ENCODE measurements at regions of chrX and their contacts with region 1.

Region 1: DNA sequence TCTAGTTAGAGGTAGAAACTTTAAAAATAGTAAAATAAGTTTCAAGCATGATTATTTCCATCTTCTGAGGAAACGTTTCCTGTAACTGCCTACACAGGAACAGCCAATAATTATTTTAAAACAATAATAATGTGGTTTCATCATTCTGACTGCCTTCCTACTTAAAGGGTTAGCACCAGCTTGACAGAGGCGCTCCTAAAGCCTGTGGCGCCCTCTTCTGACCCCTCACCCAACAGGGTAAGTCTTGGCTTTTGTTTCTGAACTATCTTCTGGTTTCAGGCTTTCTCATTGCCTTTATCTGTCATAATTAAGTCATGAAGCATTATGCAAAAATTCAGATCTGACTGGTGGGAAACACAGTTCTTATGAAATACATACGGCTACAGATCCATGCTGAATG is 96.7 kb downstream of the ITM2A start:
- DNase-seq: peak; percentile 68 to 77 (median 71)
- H3K4me3 ChIP-seq: no peak overlapping the region
- H3K4me3 Mint-ChIP-seq: peak overlapping the region; percentile 3 to 73 (median 22)
- H3K27ac ChIP-seq: peak overlapping the region; percentile 15
- H3K27ac Mint-ChIP-seq: peak overlapping the region; percentile 42 to 91 (median 64)
- H3K4me1 ChIP-seq: peaks cover 61% of the 10 kb centered on the region
- H3K4me1 Mint-ChIP-seq: peaks cover 27 to 49% (median 34%) of the 10 kb centered on the region in 4 donors
- H3K27me3 ChIP-seq: no peaks in the 10 kb centered on the region
- H3K27me3 Mint-ChIP-seq: no peaks in the 10 kb centered on the region

Region 2: DNA sequence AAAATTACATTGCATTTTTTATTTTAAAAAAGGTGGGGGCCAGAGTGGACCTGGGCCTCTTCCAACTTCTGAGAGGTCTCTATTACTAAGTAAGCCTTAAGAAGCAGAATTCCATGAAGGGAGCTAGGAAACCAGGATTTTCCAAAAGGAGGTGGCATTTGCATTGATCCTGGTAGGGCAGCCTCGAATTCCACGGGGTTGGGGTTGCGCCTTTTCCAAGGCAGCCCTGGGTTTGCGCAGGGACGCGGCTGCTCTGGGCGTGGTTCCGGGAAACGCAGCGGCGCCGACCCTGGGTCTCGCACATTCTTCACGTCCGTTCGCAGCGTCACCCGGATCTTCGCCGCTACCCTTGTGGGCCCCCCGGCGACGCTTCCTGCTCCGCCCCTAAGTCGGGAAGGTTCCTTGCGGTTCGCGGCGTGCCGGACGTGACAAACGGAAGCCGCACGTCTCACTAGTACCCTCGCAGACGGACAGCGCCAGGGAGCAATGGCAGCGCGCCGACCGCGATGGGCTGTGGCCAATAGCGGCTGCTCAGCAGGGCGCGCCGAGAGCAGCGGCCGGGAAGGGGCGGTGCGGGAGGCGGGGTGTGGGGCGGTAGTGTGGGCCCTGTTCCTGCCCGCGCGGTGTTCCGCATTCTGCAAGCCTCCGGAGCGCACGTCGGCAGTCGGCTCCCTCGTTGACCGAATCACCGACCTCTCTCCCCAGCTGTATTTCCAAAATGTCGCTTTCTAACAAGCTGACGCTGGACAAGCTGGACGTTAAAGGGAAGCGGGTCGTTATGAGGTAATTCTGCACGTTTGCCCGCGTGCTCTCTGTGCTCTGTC is 1166.6 kb before region 1 on chrX and contains the start of gene PGK1:
- CTCF ChIA-PET with region 1: no interaction called
- POLR2A ChIA-PET with region 1: no interaction called
- intact Hi-C with region 1: loop called (anchors 10 kb)
- DNase-seq: peak; percentile 90 to 96 (median 95)
- H3K4me3 ChIP-seq: peak within 1 kb of the TSS; percentile 62 to 90
- H3K4me3 Mint-ChIP-seq: peak within 1 kb of the TSS; percentile 87 to 94 (median 92)
- H3K27ac ChIP-seq: peak within 1 kb of the TSS; percentile 86
- H3K27ac Mint-ChIP-seq: peak within 1 kb of the TSS; percentile 92 to 98 (median 95)
- H3K4me1 ChIP-seq: peaks cover 34% of the 10 kb centered on the region
- H3K4me1 Mint-ChIP-seq: peaks cover 24 to 52% (median 36%) of the 10 kb centered on the region in 4 donors
- H3K27me3 ChIP-seq: no peaks in the 10 kb centered on the region
- H3K27me3 Mint-ChIP-seq: no peaks in the 10 kb centered on the region
- total RNA-seq, gene PGK1: 205 to 209 TPM

Region 3: GRCh38 chrX:78945186-78945912 is 325.1 kb before region 1 on chrX and contains the start of gene P2RY10:
- CTCF ChIA-PET with region 1: no interaction called
- POLR2A ChIA-PET with region 1: interaction called, 7 read pairs
- intact Hi-C with region 1: loop called (anchors 2 kb)
- DNase-seq: peak; percentile 70 to 80 (median 74)
- H3K4me3 ChIP-seq: peak within 1 kb of the TSS; percentile 59 to 86
- H3K4me3 Mint-ChIP-seq: peak within 1 kb of the TSS; percentile 87 to 99 (median 96)
- H3K27ac ChIP-seq: peak within 1 kb of the TSS; percentile 68
- H3K27ac Mint-ChIP-seq: peak within 1 kb of the TSS; percentile 95 to 100 (median 97)
- H3K4me1 ChIP-seq: peaks cover 45% of the 10 kb centered on the region
- H3K4me1 Mint-ChIP-seq: peaks cover 22 to 69% (median 36%) of the 10 kb centered on the region in 4 donors
- H3K27me3 ChIP-seq: no peaks in the 10 kb centered on the region
- H3K27me3 Mint-ChIP-seq: no peaks in the 10 kb centered on the region
- total RNA-seq, gene P2RY10: 87.4 to 104 TPM

Region 4: GRCh38 chrX:79096145-79096556 is 174.2 kb before region 1 on chrX:
- CTCF ChIA-PET with region 1: no interaction called
- POLR2A ChIA-PET with region 1: no interaction called
- intact Hi-C with region 1: loop called (anchors 5 kb)
- DNase-seq: peak in 3 of 5 donors; percentile 41 to 45 (median 42)
- H3K4me3 ChIP-seq: peak overlapping the region; percentile 17 to 33
- H3K4me3 Mint-ChIP-seq: peak overlapping the region; percentile 31 to 84 (median 56)
- H3K27ac ChIP-seq: peak overlapping the region; percentile 68
- H3K27ac Mint-ChIP-seq: peak overlapping the region; percentile 83 to 96 (median 91)
- H3K4me1 ChIP-seq: peaks cover 69% of the 10 kb centered on the region
- H3K4me1 Mint-ChIP-seq: peaks cover 31 to 70% (median 52%) of the 10 kb centered on the region in 4 donors
- H3K27me3 ChIP-seq: no peaks in the 10 kb centered on the region
- H3K27me3 Mint-ChIP-seq: no peaks in the 10 kb centered on the region

Region 5: DNA sequence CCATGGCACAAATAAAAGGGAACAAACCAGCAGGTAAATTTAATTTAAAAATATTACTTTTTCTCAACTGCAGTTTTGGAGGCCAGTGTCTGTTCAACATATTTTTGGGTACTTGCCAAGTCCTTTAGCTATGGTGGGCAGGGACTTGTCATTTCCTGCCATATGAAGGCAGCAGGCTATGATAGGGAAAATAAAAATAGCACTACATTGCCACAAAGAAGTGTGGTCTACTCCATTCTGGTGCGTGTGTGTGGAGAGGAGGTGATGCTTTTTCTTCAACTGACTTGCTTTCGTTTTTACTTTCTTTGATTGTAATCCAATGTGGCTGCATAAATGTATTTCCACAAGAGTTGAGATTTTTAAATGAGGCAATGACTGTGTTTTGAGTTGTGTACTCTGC is 108.7 kb before region 1 on chrX:
- CTCF ChIA-PET with region 1: no interaction called
- POLR2A ChIA-PET with region 1: interaction called, 49 read pairs
- intact Hi-C with region 1: loop called (anchors 5 kb)
- DNase-seq: peak; percentile 73 to 85 (median 79)
- H3K4me3 ChIP-seq: peak overlapping the region; percentile 45 to 55
- H3K4me3 Mint-ChIP-seq: peak overlapping the region; percentile 75 to 97 (median 94)
- H3K27ac ChIP-seq: peak overlapping the region; percentile 51
- H3K27ac Mint-ChIP-seq: peak overlapping the region; percentile 87 to 98 (median 95)
- H3K4me1 ChIP-seq: peaks cover 90% of the 10 kb centered on the region
- H3K4me1 Mint-ChIP-seq: peaks cover 37 to 85% (median 53%) of the 10 kb centered on the region in 4 donors
- H3K27me3 ChIP-seq: no peaks in the 10 kb centered on the region
- H3K27me3 Mint-ChIP-seq: no peaks in the 10 kb centered on the region

Region 6: DNA sequence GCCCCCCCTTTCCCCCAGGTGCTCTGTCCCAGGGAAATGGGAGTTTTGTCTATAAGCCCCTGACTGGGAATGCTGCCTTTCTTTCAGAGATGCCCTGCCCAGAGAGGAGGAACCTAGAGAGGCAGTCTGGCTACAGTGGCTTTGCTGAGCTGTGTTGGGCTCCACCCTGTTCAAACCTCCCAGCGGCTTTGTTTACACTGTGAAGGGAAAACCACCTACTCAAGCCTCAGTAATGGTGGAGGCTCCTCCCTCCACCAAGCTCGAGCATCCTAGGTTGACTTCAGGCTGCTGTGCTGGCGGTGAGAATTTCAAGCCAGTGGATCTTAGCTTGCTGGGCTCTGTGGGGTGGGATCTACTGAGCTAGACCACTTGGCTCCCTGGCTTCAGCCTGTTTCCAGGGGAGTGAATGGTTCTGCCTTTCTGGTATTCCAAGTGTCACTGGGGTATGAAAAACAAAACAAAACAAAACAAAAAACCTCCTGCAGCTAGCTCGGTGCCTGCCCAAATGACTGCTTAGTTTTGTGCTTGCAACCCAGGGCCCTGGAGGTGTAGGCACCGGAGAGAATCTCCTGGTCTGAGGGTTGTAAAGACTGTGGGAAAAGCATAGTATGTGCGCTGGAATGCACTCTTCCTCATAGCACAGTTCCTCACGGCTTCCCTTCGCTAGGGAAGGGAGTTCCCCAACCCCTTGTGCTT is 55.0 kb after region 1 on chrX:
- CTCF ChIA-PET with region 1: no interaction called
- POLR2A ChIA-PET with region 1: interaction called, 4 read pairs
- intact Hi-C with region 1: loop called (anchors 5 kb)
- DNase-seq: peak; percentile 50 to 65 (median 62)
- H3K4me3 ChIP-seq: peak overlapping the region in 1 of 2 donors; percentile 9
- H3K4me3 Mint-ChIP-seq: peak overlapping the region; percentile 79 to 92 (median 86)
- H3K27ac ChIP-seq: peak overlapping the region; percentile 42
- H3K27ac Mint-ChIP-seq: peak overlapping the region; percentile 87 to 97 (median 95)
- H3K4me1 ChIP-seq: peaks cover 11% of the 10 kb centered on the region
- H3K4me1 Mint-ChIP-seq: peaks cover 14 to 27% (median 21%) of the 10 kb centered on the region in 4 donors
- H3K27me3 ChIP-seq: no peaks in the 10 kb centered on the region
- H3K27me3 Mint-ChIP-seq: no peaks in the 10 kb centered on the region

Region 7: GRCh38 chrX:79515529-79515928 is 245.1 kb after region 1 on chrX:
- CTCF ChIA-PET with region 1: no interaction called
- POLR2A ChIA-PET with region 1: no interaction called
- intact Hi-C with region 1: no loop called
- DNase-seq: no peak
- H3K4me3 ChIP-seq: no peak overlapping the region
- H3K4me3 Mint-ChIP-seq: no peak overlapping the region
- H3K27ac ChIP-seq: no peak overlapping the region
- H3K27ac Mint-ChIP-seq: no peak overlapping the region
- H3K4me1 ChIP-seq: no peaks in the 10 kb centered on the region
- H3K4me1 Mint-ChIP-seq: no peaks in the 10 kb centered on the region
- H3K27me3 ChIP-seq: no peaks in the 10 kb centered on the region
- H3K27me3 Mint-ChIP-seq: no peaks in the 10 kb centered on the region